ENCODE measurements at regions of chr20 and their contacts with region 1.

Region 1: GRCh38 chr20:32134026-32134425 is 24.5 kb downstream of the TM9SF4 start:
- DNase-seq: no peak
- H3K4me3 ChIP-seq: no peak overlapping the region
- H3K27me3 ChIP-seq: no peaks in the 10 kb centered on the region
- CTCF ChIP-seq: no peak

Region 2: DNA sequence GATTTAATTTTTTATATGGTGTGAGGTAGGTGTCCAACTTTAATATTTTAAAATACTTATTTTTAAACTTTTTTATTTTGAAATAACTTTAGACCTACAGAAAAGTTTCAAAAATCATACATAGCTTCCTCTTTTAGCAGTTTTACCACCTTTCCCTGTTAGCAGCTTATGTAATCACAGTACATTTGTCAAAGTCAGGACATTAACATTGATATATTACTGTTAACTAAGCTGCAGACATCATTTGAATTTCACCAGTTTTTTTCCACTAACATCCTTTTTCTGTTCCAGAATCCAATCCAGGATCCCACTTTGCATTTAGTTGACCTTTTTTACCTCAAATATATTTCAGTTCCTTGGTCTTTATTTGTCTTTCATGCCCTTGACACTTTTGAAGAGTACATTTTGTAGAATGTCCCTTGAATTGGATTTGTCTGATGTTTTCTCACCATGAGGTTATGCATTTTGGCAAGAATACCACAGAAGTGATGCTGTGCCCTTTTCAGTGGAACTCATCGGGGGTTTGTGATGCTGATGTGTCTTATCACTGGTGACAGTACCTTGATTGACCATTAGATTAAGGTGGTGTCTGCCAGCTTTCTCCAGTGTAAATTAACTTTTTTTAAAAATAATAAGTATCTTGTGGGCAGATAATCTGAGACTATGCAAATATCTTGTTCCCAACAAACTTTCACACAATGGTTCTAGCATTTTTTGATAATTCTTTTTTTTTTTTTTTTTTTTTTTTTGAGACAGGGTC is 230.2 kb before region 1 on chr20:
- CTCF ChIA-PET with region 1: no interaction called
- POLR2A ChIA-PET with region 1: interaction called, 15 read pairs
- DNase-seq: no peak
- H3K4me3 ChIP-seq: no peak overlapping the region
- H3K27me3 ChIP-seq: peaks cover under 1% of the 10 kb centered on the region
- CTCF ChIP-seq: no peak

Region 3: DNA sequence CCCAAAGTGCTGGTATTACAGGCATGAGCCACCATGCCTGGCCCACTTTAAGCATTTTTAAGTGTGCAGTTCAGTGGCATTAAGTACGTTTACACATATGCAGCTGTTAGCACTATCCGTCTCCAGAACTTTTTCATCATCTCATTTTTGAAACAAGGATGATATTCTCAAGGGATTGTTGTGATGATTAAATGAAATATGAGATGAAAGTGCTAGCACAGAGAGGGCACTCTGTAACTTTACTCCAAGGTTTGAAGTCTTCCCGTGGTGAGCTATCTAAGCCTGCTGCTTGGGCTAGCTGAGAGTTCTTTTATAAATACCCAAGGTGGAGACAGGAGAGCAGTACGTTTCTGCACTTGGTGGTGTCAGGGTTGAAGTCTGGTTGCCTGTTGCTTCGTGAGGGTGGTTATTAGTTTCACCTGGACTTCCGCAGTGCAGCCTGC is 17.9 kb before region 1 on chr20:
- CTCF ChIA-PET with region 1: no interaction called
- POLR2A ChIA-PET with region 1: no interaction called
- DNase-seq: no peak
- H3K4me3 ChIP-seq: no peak overlapping the region
- H3K27me3 ChIP-seq: no peaks in the 10 kb centered on the region
- CTCF ChIP-seq: no peak

Region 4: GRCh38 chr20:32179515-32179914 is 45.5 kb after region 1 on chr20:
- CTCF ChIA-PET with region 1: no interaction called
- POLR2A ChIA-PET with region 1: no interaction called
- DNase-seq: no peak
- H3K4me3 ChIP-seq: no peak overlapping the region
- H3K27me3 ChIP-seq: no peaks in the 10 kb centered on the region
- CTCF ChIP-seq: no peak

Measured in BJ (cell line).